ACHN (cell line): ENCODE measurements at regions of chr17 and their contacts with region 1.

Region 1: GRCh38 chr17:9522074-9522473 is 53.5 kb downstream of the STX8 start:
- DNase-seq: peak; percentile 53

Region 2: DNA sequence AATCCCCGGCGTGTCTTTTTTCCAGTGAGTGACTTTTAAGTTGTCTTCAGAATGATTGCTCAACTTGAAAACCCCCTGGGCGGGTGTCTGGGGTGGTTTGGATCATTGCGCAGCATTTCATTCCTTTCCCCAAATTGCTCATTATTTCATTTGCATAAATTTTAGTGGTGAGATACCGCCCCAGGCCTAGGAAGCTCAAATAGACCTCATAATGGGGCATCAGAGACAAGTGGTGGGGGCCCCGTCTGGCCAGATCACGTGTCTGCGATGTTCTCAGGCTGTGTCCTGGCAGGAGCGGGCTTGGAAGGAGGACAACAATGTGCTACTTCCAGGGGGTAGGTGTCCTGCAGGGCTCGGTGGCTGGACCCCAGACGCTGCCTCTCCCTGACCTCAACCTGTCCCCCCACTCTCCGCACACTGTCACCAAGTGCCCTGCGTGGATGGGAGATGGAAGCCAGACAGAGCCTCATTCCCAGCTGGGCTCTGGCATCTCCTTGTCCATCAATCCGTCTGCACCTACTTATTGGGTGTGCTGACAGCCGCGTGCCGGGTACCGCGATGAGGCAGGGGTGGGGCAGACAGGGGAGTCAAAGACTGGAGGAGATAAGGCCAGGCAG is 383.9 kb before region 1 on chr17:
- in situ Hi-C with region 1: loop called (anchors 25 kb)
- DNase-seq: no peak